Esophagus muscularis mucosa (tissue), 4 donors: ENCODE measurements at regions of chrX and their contacts with region 1.

Region 1: DNA sequence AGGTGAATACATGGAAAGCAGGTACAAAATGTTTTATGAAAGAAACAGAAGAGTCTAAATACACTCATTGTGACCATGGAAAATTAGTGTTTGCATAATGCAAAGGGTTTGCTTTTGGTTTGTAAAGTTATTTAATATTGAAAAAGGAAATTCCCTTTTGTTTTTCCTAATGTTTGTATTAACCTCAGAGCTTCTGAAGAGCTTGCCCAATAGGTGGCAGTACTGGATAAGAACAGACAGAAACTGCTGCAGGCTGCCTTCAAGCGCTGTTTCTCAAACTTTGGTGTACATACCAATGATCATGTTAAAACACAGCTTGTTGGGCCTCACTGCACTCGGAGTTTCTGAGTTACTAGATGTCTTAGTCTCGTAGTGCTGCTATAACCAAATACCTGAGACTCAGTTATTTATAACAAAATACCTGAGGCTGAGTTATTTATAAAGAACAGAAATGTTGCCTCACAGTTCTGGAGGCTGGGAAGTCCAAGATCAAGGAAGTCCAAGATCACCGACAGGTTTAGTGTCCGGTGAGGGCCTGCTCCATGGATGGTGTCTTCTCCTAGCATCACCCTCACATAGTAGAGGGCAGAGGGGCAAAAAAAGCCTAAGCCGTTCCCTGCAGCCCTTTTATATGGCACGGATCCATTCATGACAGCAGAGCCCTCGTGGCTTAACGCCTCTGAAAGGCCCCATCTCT is 54.2 kb downstream of the SUPT20HL2 start:
- DNase-seq: no peak
- H3K4me3 ChIP-seq: no peak overlapping the region
- H3K27ac ChIP-seq: no peak overlapping the region
- H3K4me1 ChIP-seq: peaks cover 0 to 8% (median 2%) of the 10 kb centered on the region in 4 donors
- H3K27me3 ChIP-seq: no peaks in the 10 kb centered on the region
- CTCF ChIP-seq: peak; percentile 58 to 60 (median 59)
- EP300 ChIP-seq: no peak
- POLR2A ChIP-seq: no peak

Region 2: DNA sequence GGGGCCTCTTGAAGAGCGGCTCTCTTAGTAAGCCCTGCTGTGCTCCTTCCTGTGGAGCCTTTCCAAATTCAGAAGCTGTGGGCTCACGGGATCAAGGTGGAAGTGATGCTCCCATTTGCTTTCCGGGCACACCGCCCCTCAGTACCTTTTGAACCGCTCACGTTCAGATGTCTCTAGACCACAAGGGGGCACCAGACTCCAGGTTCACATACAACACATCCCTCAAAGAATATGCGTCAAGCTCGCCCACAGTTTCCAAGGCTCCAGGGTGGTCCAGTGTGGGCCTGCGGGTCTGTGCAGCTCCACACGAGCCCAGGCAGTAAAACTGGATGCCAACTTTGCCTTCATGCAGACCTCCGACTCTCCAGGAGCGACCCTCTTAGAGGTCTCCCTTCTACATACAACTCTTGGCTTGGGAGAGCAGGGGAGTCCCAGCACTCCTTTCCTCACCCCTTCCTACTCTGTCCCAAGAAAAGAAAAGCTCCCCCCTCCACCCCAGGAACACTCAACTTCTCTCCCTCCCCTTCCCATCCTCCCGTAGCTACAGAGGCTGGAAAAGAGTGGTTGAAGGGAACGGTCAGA is 111.8 kb after region 1 on chrX:
- intact Hi-C with region 1: loop called (anchors 5 kb)
- DNase-seq: no peak
- H3K4me3 ChIP-seq: no peak overlapping the region
- H3K27ac ChIP-seq: no peak overlapping the region
- H3K4me1 ChIP-seq: peaks cover 0 to 13% (median 7%) of the 10 kb centered on the region in 4 donors
- H3K27me3 ChIP-seq: no peaks in the 10 kb centered on the region
- CTCF ChIP-seq: peak; percentile 41 to 66 (median 55)
- EP300 ChIP-seq: no peak
- POLR2A ChIP-seq: no peak

Region 3: GRCh38 chrX:24395775-24396174 is 136.1 kb after region 1 on chrX:
- intact Hi-C with region 1: loop called (anchors 5 kb)
- DNase-seq: no peak
- H3K4me3 ChIP-seq: no peak overlapping the region
- H3K27ac ChIP-seq: peak overlapping the region; percentile 65 to 80 (median 70)
- H3K4me1 ChIP-seq: peaks cover 0 to 20% (median 17%) of the 10 kb centered on the region in 4 donors
- H3K27me3 ChIP-seq: no peaks in the 10 kb centered on the region
- CTCF ChIP-seq: peak; percentile 68 to 86 (median 74)
- EP300 ChIP-seq: no peak
- POLR2A ChIP-seq: no peak

Region 4: GRCh38 chrX:24498975-24499374 is 239.3 kb after region 1 on chrX:
- intact Hi-C with region 1: loop called (anchors 10 kb)
- DNase-seq: no peak
- H3K4me3 ChIP-seq: no peak overlapping the region
- H3K27ac ChIP-seq: peak overlapping the region in 3 of 4 donors; percentile 47 to 65 (median 58)
- H3K4me1 ChIP-seq: peaks cover 3 to 25% (median 22%) of the 10 kb centered on the region in 4 donors
- H3K27me3 ChIP-seq: no peaks in the 10 kb centered on the region
- CTCF ChIP-seq: peak; percentile 60 to 64 (median 62)
- EP300 ChIP-seq: no peak
- POLR2A ChIP-seq: no peak